ENCODE measurements at regions of chr1 and their contacts with region 1.

Region 1: DNA sequence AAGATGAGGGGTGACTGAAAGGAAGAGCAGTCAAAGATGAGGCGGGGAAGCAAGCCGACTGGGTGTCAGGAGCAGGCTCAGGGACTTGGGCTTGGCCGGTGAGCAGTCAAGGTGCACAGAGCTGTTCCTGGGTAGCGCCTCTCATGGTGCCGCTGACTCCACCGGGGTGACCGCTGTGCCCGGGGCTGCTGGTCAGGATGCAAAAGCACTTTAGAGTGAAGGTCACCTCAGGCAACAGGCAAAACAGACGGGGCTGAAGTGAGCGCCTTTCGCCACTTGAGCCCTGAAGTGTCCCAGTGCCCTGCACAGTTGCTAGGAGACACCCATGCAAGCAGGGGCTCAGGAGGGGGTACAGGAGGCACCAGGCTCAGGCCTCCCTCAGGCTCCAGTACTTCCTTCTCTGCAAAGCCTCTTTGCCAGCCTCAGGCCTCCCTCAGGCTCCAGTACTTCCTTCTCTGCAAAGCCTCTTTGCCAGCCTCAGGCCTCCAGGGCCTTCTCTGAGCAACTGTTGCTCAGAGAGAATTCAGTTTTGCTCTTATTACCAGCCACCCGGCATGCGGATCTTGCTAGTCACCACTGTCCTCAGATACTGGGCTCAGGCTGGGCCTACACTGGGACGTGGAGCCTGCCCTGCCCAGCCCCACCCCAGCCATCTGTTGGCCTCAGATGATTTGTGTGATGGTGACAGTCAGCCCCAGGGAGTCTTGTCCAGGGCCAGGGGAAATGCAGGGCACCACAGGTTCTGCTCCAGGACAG is 99.7 kb upstream of the IRF2BP2 start:
- DNase-seq: peak; percentile 60
- ATAC-seq: peak; percentile 44

Region 2: DNA sequence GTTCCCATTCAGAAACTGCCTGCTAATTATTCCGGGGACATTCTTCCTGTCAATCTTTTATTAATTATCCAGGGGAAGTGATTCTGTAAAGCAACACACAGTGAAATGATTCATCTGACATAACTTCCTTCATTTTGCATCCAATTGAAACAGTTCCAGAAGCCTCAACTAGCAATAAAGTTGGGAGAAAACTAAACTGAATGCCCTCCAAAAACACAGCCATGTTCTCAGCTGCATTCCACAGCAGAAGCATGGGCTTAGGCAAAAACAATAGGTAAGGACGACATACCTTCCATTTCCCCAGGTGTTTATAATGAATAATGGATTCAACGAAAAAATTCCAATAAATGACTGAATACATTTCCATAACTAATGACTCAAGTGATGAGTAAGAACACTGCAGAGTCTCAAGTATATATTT is 193.8 kb before region 1 on chr1:
- intact Hi-C with region 1: loop called (anchors 10 kb)
- DNase-seq: no peak
- ATAC-seq: no peak

Region 3: DNA sequence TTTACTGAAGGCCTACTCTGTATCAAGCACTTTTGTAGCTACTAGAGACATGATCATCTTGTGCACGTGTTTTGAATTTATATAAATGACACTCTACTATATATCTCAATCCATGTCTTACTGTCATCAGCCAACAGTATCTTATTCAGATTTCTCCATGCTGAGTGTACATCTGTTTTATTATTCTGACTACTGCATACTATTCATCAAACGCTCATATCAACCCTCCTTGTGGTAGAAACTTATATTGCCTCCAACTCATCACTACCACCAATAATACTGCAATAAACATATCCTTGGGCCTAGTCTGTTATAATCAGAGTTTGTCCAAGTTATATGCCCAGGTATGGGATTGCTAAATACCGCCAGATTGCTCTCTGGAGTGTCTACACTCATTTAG is 18.1 kb before region 1 on chr1:
- intact Hi-C with region 1: no loop called
- DNase-seq: no peak
- ATAC-seq: no peak